BJ (cell line): ENCODE measurements at regions of chr9 and their contacts with region 1.

Region 1: DNA sequence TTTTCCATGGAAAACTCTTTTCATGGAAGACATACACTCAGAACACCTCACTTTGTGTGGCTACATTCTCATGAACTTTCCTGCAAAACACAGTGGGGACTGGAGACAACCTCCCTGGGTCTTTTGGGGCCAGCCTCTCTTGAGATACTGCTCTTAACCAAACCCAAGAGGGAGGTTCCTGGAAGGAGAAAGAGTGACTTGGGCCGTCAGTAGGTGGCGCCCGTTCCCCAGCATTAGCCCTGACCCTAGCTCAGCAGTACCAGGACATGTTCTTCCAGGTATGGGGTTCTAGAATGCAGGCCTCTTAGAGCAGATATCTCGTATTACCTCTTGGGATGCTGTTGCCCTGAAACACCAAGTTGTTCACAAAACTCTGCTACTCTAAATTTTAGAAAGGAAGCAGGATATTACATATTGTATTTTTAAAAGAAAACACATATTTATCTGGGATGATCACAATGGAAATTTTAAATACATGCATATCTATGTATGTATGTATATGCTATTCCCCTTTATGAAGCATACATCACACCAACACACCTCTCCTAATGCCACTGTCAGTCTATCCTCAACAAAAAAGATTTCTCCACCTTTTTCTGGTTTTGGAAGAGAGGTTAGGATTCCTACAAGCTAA is 15.8 kb upstream of the GLIS3 start:
- DNase-seq: no peak
- H3K4me3 ChIP-seq: no peak overlapping the region
- H3K27me3 ChIP-seq: peaks cover 1% of the 10 kb centered on the region; the same call in 1 of the 2 replicates
- CTCF ChIP-seq: peak; percentile 96

Region 2: GRCh38 chr9:4301971-4302427 is 13.7 kb before region 1 on chr9:
- CTCF ChIA-PET with region 1: interaction called, 41 read pairs
- POLR2A ChIA-PET with region 1: no interaction called
- DNase-seq: peak; percentile 49
- H3K4me3 ChIP-seq: no peak overlapping the region
- H3K27me3 ChIP-seq: no peaks in the 10 kb centered on the region
- CTCF ChIP-seq: no peak

Region 3: GRCh38 chr9:4327504-4328191 is 11.9 kb after region 1 on chr9:
- CTCF ChIA-PET with region 1: interaction called, 79 read pairs
- POLR2A ChIA-PET with region 1: no interaction called
- DNase-seq: no peak
- H3K4me3 ChIP-seq: no peak overlapping the region
- H3K27me3 ChIP-seq: no peaks in the 10 kb centered on the region
- CTCF ChIP-seq: no peak

Region 4: GRCh38 chr9:4339357-4339756 is 23.7 kb after region 1 on chr9:
- CTCF ChIA-PET with region 1: interaction called, 79 read pairs
- POLR2A ChIA-PET with region 1: no interaction called
- DNase-seq: peak; percentile 20
- H3K4me3 ChIP-seq: no peak overlapping the region
- H3K27me3 ChIP-seq: no peaks in the 10 kb centered on the region
- CTCF ChIP-seq: peak; percentile 97

Region 5: DNA sequence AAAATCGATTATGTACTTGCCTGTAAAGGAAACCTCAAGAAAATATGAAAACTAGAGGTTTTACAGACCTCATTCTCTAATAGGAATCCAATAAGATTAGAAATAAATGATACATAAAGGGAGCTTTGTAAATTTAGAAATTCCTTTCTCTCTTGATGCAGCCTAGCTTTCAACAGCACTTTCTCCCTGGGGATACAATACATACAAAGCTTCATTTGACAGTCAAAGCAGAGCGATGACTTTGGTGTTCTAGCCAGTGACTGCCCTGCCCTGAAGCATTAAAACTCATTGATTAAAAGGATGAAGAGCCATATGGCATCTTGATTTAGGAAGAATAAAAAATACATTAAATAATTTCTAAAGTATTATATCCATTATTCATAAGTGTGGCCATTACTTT is 30.4 kb after region 1 on chr9:
- CTCF ChIA-PET with region 1: interaction called, 79 read pairs
- POLR2A ChIA-PET with region 1: no interaction called
- DNase-seq: no peak
- H3K4me3 ChIP-seq: no peak overlapping the region
- H3K27me3 ChIP-seq: no peaks in the 10 kb centered on the region
- CTCF ChIP-seq: no peak

Region 6: GRCh38 chr9:4366591-4367330 is 51.1 kb after region 1 on chr9:
- CTCF ChIA-PET with region 1: interaction called, 94 read pairs
- POLR2A ChIA-PET with region 1: no interaction called
- DNase-seq: no peak
- H3K4me3 ChIP-seq: no peak overlapping the region
- H3K27me3 ChIP-seq: peaks cover 2% of the 10 kb centered on the region
- CTCF ChIP-seq: peak; percentile 87